ENCODE measurements at regions of chr20 and their contacts with region 1.

Region 1: DNA sequence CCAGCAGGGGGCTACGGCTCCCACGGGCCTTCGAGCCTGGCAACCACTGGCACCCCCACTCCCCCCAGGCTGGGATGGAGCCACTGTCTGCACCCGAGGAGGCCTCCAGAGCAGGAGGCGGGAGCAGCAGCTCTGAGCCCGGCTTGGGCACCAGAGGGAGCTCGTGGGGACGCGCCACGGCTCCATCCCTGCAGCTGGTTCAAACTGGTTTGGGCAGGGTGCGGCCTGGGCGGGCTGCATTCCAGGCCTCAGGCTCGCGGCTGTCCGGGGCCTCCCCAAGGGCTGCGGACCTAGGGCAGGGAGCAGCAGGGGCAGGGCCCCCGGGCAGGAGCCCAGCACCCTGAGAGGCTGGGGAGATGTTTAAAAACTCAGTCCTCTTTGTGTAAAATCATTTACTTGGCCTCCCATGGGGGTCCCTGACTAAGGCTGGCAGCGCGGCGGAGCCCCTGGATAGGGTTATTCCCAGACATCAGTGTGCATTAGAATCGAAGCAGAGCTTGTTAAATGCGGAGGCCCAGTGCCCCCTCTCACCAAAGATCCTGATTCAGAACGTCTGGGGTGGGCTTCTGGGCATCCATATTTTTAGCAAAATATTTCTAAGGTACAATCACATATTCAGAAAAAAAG is 4.1 kb upstream of the BCAS4 start:
- DNase-seq: peak; percentile 88 to 95 (median 93)
- ATAC-seq: peak; percentile 87
- H3K4me3 ChIP-seq: no peak overlapping the region
- H3K27ac ChIP-seq: peak overlapping the region; percentile 74 to 75
- H3K4me1 ChIP-seq: peaks cover 18 to 33% of the 10 kb centered on the region in 2 donors
- H3K27me3 ChIP-seq: peaks cover 0 to 27% of the 10 kb centered on the region in 2 donors
- CTCF ChIP-seq: peak; percentile 56 to 61

Region 2: GRCh38 chr20:50929299-50930138 is 138.8 kb after region 1 on chr20:
- intact Hi-C with region 1: loop called in 1 of 2 experiments (anchors 10 kb)
- DNase-seq: peak; percentile 83 to 96 (median 88)
- ATAC-seq: peak; percentile 84
- H3K4me3 ChIP-seq: peak overlapping the region; percentile 68 to 80
- H3K27ac ChIP-seq: peak overlapping the region; percentile 60 to 98
- H3K4me1 ChIP-seq: peaks cover 11 to 62% of the 10 kb centered on the region in 2 donors
- H3K27me3 ChIP-seq: no peaks in the 10 kb centered on the region
- CTCF ChIP-seq: peak; percentile 79 to 81

Region 3: GRCh38 chr20:50977051-50978045 is 186.6 kb after region 1 on chr20:
- intact Hi-C with region 1: no loop called
- DNase-seq: no peak
- ATAC-seq: no peak
- H3K4me3 ChIP-seq: no peak overlapping the region
- H3K27ac ChIP-seq: no peak overlapping the region
- H3K4me1 ChIP-seq: no peaks in the 10 kb centered on the region
- H3K27me3 ChIP-seq: peaks cover 0 to 55% of the 10 kb centered on the region in 2 donors
- CTCF ChIP-seq: no peak

Measured in left lung (tissue), 14 donors.